Naive thymus-derived CD8-positive, alpha-beta T cell (primary cell): ENCODE measurements at regions of chr9 and their contacts with region 1.

Region 1: DNA sequence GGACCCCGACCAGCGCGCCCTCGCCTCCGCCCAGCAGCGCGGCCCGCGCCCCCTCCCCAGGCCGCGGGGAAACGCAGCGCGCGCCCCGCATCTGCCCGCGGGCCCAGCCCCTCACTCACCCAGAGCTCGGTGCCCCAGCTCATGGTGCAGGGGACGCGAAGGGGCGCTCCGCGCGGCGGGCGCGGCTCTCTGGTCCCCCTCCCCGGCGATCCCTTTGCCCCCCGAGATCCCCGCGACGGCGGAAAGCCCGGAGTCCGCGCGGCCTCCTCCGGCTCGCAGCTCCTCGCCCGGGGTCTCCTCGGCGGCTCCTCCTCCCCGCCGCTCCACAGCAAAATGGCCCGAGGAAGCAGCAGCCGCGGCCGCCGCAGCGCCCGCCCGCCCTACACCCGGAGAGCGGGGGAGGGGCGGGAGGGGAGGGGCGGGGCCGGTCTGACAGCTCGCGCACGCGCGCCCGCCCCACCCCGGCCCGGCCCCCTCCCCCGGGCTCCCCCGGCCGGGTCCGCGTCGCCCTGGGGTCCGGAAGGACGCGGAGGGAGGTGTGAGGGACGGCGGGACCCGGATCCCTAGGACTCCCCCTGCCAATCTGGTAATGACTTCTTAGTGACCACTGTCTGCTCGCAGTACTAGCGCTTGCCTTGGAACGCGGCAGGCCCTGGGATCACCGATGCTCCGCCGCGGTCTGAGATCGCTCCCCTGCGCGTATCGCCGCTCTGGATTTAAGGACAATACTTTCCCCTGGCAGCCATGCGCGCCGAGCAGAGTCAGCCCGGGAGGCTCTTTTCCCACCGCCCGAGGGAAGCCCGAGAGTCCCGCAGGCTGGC is at the start of gene FNBP1:
- DNase-seq: peak; percentile 67 to 89 (median 80)
- ATAC-seq: peak; percentile 67 to 73
- H3K4me3 Mint-ChIP-seq: peak within 1 kb of the TSS; percentile 97 to 100 (median 99)
- H3K27ac Mint-ChIP-seq: peak within 1 kb of the TSS; percentile 95 to 99 (median 98)
- H3K4me1 Mint-ChIP-seq: peaks cover 32 to 65% (median 49%) of the 10 kb centered on the region in 4 donors
- H3K27me3 Mint-ChIP-seq: no peaks in the 10 kb centered on the region
- polyA plus RNA-seq, gene FNBP1: 130 to 143 (median 136) TPM

Region 2: GRCh38 chr9:129868916-129869486 is 174.0 kb before region 1 on chr9:
- POLR2A ChIA-PET with region 1: interaction called, 17 read pairs
- DNase-seq: peak; percentile 72 to 96 (median 94)
- ATAC-seq: peak; percentile 83 to 90
- H3K4me3 Mint-ChIP-seq: peak overlapping the region; percentile 19 to 79 (median 64)
- H3K27ac Mint-ChIP-seq: peak overlapping the region; percentile 85 to 96 (median 94)
- H3K4me1 Mint-ChIP-seq: peaks cover 32 to 87% (median 78%) of the 10 kb centered on the region in 4 donors
- H3K27me3 Mint-ChIP-seq: no peaks in the 10 kb centered on the region

Region 3: GRCh38 chr9:129962889-129963703 is 79.9 kb before region 1 on chr9:
- POLR2A ChIA-PET with region 1: interaction called, 10 read pairs
- DNase-seq: peak; percentile 42 to 88 (median 79)
- ATAC-seq: peak; percentile 96 to 97
- H3K4me3 Mint-ChIP-seq: peak overlapping the region; percentile 85 to 93 (median 88)
- H3K27ac Mint-ChIP-seq: peak overlapping the region; percentile 95 to 99 (median 98)
- H3K4me1 Mint-ChIP-seq: peaks cover 41 to 76% (median 68%) of the 10 kb centered on the region in 4 donors
- H3K27me3 Mint-ChIP-seq: no peaks in the 10 kb centered on the region

Region 4: GRCh38 chr9:130029223-130029973 is 13.6 kb before region 1 on chr9:
- POLR2A ChIA-PET with region 1: interaction called, 32 read pairs
- DNase-seq: no peak
- ATAC-seq: peak in 1 of 2 donors; percentile 10
- H3K4me3 Mint-ChIP-seq: peak overlapping the region; percentile 50 to 83 (median 70)
- H3K27ac Mint-ChIP-seq: peak overlapping the region; percentile 74 to 93 (median 87)
- H3K4me1 Mint-ChIP-seq: peaks cover 41 to 99% (median 91%) of the 10 kb centered on the region in 4 donors
- H3K27me3 Mint-ChIP-seq: no peaks in the 10 kb centered on the region

Region 5: DNA sequence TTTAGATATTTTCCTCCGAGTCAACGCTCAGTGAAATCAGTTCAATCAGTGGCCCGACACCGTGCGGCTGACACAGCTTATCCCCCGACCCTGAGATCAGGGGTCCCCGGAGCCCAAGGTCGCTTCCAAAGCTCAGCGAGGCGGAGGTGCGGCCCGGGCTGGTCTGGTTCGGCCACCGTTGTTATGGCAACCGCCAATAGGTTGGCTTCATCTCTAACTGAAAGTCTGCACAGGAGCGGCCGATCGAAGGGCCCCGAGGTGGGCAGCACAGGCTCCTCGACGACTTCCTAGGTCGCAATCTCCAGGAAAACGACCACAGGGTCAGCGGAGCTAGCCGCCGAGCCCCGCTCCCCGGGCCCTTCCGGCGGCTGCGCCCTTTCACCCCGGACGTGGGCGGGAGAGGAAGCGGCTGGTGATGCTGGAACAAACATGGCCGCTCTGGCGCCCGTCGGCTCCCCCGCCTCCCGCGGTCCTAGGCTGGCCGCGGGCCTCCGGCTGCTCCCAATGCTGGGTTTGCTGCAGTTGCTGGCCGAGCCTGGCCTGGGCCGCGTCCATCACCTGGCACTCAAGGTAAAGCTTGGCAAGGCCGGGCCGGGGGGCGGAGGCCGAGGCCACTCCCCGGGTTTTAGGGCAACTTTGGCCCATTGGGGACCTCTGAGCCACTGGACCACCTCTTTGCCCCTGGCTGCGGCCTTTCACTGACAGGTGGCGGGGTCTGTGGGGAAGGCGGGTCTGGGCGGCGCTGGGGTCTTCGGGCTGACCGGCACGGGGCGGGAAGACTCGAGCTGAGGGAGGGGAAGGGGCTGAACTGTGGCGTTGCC is 10.7 kb after region 1 on chr9 and contains the start of gene GPR107:
- POLR2A ChIA-PET with region 1: interaction called, 65 read pairs
- DNase-seq: peak; percentile 52 to 85 (median 71)
- ATAC-seq: peak; percentile 94
- H3K4me3 Mint-ChIP-seq: peak within 1 kb of the TSS; percentile 89 to 95 (median 92)
- H3K27ac Mint-ChIP-seq: peak within 1 kb of the TSS; percentile 91 to 96 (median 94)
- H3K4me1 Mint-ChIP-seq: peaks cover 8 to 52% (median 34%) of the 10 kb centered on the region in 4 donors
- H3K27me3 Mint-ChIP-seq: no peaks in the 10 kb centered on the region
- polyA plus RNA-seq, gene GPR107: 1.4 to 3.2 (median 2.2) TPM